Activated T-helper 1 cell treated with anti-CD3 and anti-CD28 coated beads, Interleukin-12 subunit alpha, Interleukin-12 subunit beta, Interleukin-2, Interleukin-4 antibody, amounts not matched to agents 30 ng/mL and 10 ng/mL and 1 ng/mL, durations not matched to agents 14 hours and 24 hours and 36 hours (primary cell): ENCODE measurements at regions of chr20 and their contacts with region 1.

Region 1: GRCh38 chr20:52127309-52127708 is 64.3 kb downstream of the ZFP64 start:
- DNase-seq: no peak
- H3K4me3 Mint-ChIP-seq: no peak overlapping the region
- H3K27ac Mint-ChIP-seq: no peak overlapping the region
- H3K4me1 Mint-ChIP-seq: peaks cover 8% of the 10 kb centered on the region
- H3K27me3 Mint-ChIP-seq: peaks cover 2% of the 10 kb centered on the region

Region 2: GRCh38 chr20:52150440-52151258 is 23.3 kb after region 1 on chr20:
- intact Hi-C with region 1: loop called (anchors 1 kb)
- DNase-seq: no peak
- H3K4me3 Mint-ChIP-seq: no peak overlapping the region
- H3K27ac Mint-ChIP-seq: no peak overlapping the region
- H3K4me1 Mint-ChIP-seq: no peaks in the 10 kb centered on the region
- H3K27me3 Mint-ChIP-seq: no peaks in the 10 kb centered on the region

Region 3: GRCh38 chr20:52191132-52191915 is 64.0 kb after region 1 on chr20 and contains the start of gene ZFP64:
- intact Hi-C with region 1: loop called (anchors 5 kb)
- DNase-seq: peak; percentile 67
- H3K4me3 Mint-ChIP-seq: peak within 1 kb of the TSS; percentile 95
- H3K27ac Mint-ChIP-seq: peak within 1 kb of the TSS; percentile 91
- H3K4me1 Mint-ChIP-seq: peaks cover 23% of the 10 kb centered on the region
- H3K27me3 Mint-ChIP-seq: no peaks in the 10 kb centered on the region
- total RNA-seq, gene ZFP64: 12.2 and 12.8 TPM in 2 replicates